Heart left ventricle (tissue), 16 donors: ENCODE measurements at regions of chr10 and their contacts with region 1.

Region 1: GRCh38 chr10:131736321-131736980 is 164.4 kb upstream of the PPP2R2D start:
- DNase-seq: peak in 1 of 5 donors; percentile 10
- ATAC-seq: no peak
- H3K4me3 ChIP-seq: no peak overlapping the region
- H3K27ac ChIP-seq: no peak overlapping the region
- H3K4me1 ChIP-seq: no peaks in the 10 kb centered on the region
- H3K27me3 ChIP-seq: peaks cover 0 to 8% (median 0%) of the 10 kb centered on the region in 9 donors
- CTCF ChIP-seq: no peak
- POLR2A ChIP-seq: no peak

Region 2: DNA sequence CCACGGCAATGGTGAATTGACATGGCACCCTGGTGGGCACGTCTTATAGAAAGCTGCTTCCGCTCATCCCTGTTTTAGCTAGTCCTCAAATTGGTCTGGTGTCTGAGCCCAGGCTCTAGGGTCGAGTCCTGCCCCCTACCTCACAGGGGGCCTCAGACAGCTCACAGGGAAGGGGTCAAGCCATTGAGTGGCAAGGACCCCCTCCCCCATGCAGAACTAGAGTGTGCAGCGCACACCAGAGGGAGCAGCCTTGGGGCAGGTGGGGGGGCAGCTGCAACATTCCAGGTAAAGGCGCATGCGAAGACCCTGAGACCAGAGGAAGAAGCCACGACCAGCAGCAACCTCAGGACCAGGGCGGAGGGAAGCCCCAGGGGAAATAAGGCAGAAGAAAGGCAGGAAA is 76.0 kb before region 1 on chr10:
- intact Hi-C with region 1: loop called in 1 of 10 experiments (anchors 2 kb)
- DNase-seq: no peak
- ATAC-seq: no peak
- H3K4me3 ChIP-seq: no peak overlapping the region
- H3K27ac ChIP-seq: no peak overlapping the region
- H3K4me1 ChIP-seq: no peaks in the 10 kb centered on the region
- H3K27me3 ChIP-seq: peaks cover 0 to 4% (median 0%) of the 10 kb centered on the region in 9 donors
- CTCF ChIP-seq: no peak
- POLR2A ChIP-seq: no peak

Region 3: GRCh38 chr10:132929953-132930548 is 1193.6 kb after region 1 on chr10:
- intact Hi-C with region 1: no loop called
- DNase-seq: peak in 1 of 5 donors; percentile 59
- ATAC-seq: no peak
- H3K4me3 ChIP-seq: no peak overlapping the region
- H3K27ac ChIP-seq: no peak overlapping the region
- H3K4me1 ChIP-seq: no peaks in the 10 kb centered on the region
- H3K27me3 ChIP-seq: no peaks in the 10 kb centered on the region
- CTCF ChIP-seq: no peak
- POLR2A ChIP-seq: no peak